ENCODE measurements at regions of chr2 and their contacts with region 1.

Region 1: GRCh38 chr2:88669371-88670214 is 21.9 kb upstream of the RPIA start:
- DNase-seq: no peak
- H3K4me3 ChIP-seq: no peak overlapping the region
- CTCF ChIP-seq: peak; percentile 63

Region 2: DNA sequence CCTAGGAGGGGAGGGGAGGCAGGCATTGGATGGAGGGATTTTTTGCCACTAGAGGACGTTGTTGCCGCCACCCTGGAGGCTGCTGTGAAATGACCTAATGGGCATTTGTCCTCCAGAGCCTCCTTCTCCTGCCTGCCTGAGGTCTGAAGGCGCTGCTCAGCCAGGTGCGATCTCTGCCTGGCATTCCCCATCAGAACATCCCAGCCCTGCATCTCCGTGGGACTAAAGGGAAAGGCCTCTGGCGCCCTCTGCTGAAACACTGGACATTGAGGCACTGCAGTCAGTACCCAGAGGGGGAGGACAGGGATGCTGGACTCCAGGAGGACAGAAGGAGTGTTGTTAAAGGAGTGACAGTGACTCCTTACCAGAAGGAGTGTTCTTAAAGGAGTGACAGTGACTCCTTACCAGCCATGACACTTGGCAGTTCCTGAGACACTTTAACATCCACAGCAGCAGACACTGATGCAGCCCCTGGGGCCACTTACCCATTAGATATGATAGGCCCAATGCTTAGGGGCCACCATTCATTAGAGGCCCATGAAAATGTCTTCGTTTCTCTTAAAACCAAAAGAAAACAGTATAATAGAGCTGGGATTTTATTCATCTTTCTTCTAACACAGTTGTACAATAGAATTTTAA is 482.4 kb before region 1 on chr2:
- CTCF ChIA-PET with region 1: interaction called, 13 read pairs
- POLR2A ChIA-PET with region 1: no interaction called
- DNase-seq: no peak
- H3K4me3 ChIP-seq: no peak overlapping the region
- CTCF ChIP-seq: peak; percentile 78

Region 3: DNA sequence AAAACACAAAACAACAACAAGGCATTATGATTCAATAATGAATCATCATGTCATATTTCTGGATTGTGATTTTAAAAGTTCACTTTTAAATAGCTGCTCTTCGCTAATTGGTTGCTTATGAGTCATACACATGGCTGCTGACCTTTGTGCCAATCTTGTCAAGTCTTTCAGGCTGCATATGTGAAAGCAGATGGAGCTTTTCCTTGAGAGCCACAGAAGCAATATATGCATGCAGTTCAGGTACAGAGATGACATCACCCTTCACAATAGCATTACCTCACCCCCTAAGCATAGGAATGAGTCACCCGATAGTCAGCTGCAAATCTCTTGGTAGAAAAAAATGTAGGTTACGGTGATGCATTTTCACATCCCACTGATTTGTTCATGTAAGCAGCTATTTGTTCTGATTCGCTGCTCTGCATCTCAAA is 69.5 kb before region 1 on chr2:
- CTCF ChIA-PET with region 1: interaction called, 692 read pairs
- POLR2A ChIA-PET with region 1: no interaction called
- DNase-seq: peak; percentile 72
- H3K4me3 ChIP-seq: no peak overlapping the region
- CTCF ChIP-seq: no peak

Region 4: DNA sequence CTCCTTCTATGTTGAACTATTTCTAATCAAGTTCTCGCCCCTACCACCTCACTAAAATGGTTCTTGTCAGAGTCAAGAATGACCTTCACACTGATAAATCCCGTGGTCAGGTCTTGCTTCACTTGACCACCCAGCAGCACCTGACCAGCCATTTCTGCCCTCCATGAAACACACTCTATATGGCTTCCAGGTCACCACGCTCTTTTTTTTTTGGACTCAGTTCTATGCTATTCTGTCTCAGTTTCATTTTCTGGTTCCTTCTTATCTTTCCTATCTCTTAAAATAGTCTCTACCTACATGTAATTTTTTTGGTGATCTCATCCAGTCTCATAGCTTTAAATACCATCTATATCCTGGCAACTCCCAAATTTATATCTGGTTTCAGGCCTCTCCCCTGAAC is 53.8 kb before region 1 on chr2:
- CTCF ChIA-PET with region 1: interaction called, 11 read pairs
- POLR2A ChIA-PET with region 1: no interaction called
- DNase-seq: no peak
- H3K4me3 ChIP-seq: no peak overlapping the region
- CTCF ChIP-seq: no peak

Region 5: GRCh38 chr2:88680266-88680902 is 10.8 kb after region 1 on chr2:
- CTCF ChIA-PET with region 1: interaction called, 24 read pairs
- POLR2A ChIA-PET with region 1: no interaction called
- DNase-seq: no peak
- H3K4me3 ChIP-seq: no peak overlapping the region
- CTCF ChIP-seq: no peak

Region 6: GRCh38 chr2:88691339-88692183 is 22.0 kb after region 1 on chr2 and contains the start of gene RPIA:
- CTCF ChIA-PET with region 1: interaction called, 34 read pairs
- POLR2A ChIA-PET with region 1: interaction called, 6 read pairs
- DNase-seq: peak; percentile 91
- H3K4me3 ChIP-seq: peak within 1 kb of the TSS; percentile 94
- CTCF ChIP-seq: peak; percentile 78

Measured in AG04449 (cell line).